Naive thymus-derived CD4-positive, alpha-beta T cell (primary cell): ENCODE measurements at regions of chr15 and their contacts with region 1.

Region 1: GRCh38 chr15:34969340-34970097 is at the start of gene AQR:
- DNase-seq: peak; percentile 74 to 91 (median 85)
- ATAC-seq: peak; percentile 98
- H3K4me3 ChIP-seq: peak within 1 kb of the TSS; percentile 99
- H3K4me3 Mint-ChIP-seq: peak within 1 kb of the TSS; percentile 92 to 99 (median 98)
- H3K27ac ChIP-seq: peak within 1 kb of the TSS; percentile 83
- H3K27ac Mint-ChIP-seq: peak within 1 kb of the TSS; percentile 88 to 100 (median 95)
- H3K4me1 ChIP-seq: peaks cover 10 to 15% of the 10 kb centered on the region in 2 donors
- H3K4me1 Mint-ChIP-seq: peaks cover 30 to 56% (median 51%) of the 10 kb centered on the region in 7 donors
- H3K27me3 ChIP-seq: no peaks in the 10 kb centered on the region
- H3K27me3 Mint-ChIP-seq: no peaks in the 10 kb centered on the region
- total RNA-seq, gene AQR: 38.1 to 43.5 (median 41.3) TPM

Region 2: DNA sequence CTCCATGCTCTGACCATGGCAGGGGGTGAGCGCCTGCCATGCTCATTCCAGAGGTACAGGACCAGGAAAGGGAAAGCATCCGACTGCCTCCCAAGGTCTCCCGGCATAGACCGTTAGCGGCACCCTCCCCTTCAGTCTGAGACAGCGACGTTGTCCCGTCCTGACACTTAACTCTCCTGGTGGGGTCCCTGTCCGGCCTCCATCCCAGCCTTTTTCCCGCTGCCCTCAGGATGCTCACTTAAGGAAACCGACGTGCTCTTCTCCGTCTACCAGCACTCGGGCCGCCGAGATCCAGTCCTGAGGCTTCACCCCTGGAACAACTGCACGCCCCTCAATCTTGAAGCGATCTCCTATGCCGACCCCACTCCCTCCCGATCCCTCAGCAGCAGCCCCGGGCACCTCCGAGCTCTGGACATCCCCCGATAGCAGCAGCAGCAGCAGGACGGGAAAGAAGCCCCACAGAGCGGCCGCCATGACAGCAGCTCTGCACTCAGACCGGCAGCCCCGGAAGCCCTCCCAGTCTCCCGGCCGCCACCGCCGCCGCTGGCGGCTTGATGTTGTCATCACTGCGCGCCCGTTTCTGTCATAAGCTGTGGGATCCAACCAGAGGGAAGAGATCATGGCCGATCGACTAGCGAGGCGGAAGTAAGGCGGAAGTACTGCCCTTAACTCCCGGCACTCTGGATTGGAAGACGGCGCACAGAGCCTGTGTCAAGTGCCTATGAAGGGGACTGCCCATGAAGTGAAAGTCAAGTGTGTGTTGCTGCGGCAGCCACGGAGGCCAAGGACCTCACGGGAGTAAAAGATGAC is 867.9 kb before region 1 on chr15 and contains the starts of genes EMC7 and PGBD4:
- CTCF ChIA-PET with region 1: no interaction called
- POLR2A ChIA-PET with region 1: no interaction called
- intact Hi-C with region 1: loop called in 1 of 2 experiments (anchors 5 kb)
- DNase-seq: peak; percentile 98 to 99 (median 99)
- ATAC-seq: peak; percentile 99
- H3K4me3 ChIP-seq: peak within 1 kb of the TSS; percentile 66
- H3K4me3 Mint-ChIP-seq: peak within 1 kb of the TSS; percentile 91 to 100 (median 96)
- H3K27ac ChIP-seq: peak within 1 kb of the TSS; percentile 96
- H3K27ac Mint-ChIP-seq: peak within 1 kb of the TSS; percentile 97 to 100 (median 98)
- H3K4me1 ChIP-seq: peaks cover 16 to 27% of the 10 kb centered on the region in 2 donors
- H3K4me1 Mint-ChIP-seq: peaks cover 15 to 56% (median 45%) of the 10 kb centered on the region in 7 donors
- H3K27me3 ChIP-seq: no peaks in the 10 kb centered on the region
- H3K27me3 Mint-ChIP-seq: peaks cover 0 to 3% (median 0%) of the 10 kb centered on the region in 5 donors
- total RNA-seq, gene EMC7: 30.1 to 65.1 (median 36.9) TPM
- total RNA-seq, gene PGBD4: 3.2 to 6.5 (median 4.2) TPM

Region 3: GRCh38 chr15:34837246-34838016 is 132.1 kb before region 1 on chr15:
- CTCF ChIA-PET with region 1: no interaction called
- POLR2A ChIA-PET with region 1: no interaction called
- intact Hi-C with region 1: no loop called
- DNase-seq: no peak
- ATAC-seq: no peak
- H3K4me3 ChIP-seq: no peak overlapping the region
- H3K4me3 Mint-ChIP-seq: no peak overlapping the region
- H3K27ac ChIP-seq: no peak overlapping the region
- H3K27ac Mint-ChIP-seq: no peak overlapping the region
- H3K4me1 ChIP-seq: no peaks in the 10 kb centered on the region
- H3K4me1 Mint-ChIP-seq: no peaks in the 10 kb centered on the region
- H3K27me3 ChIP-seq: no peaks in the 10 kb centered on the region
- H3K27me3 Mint-ChIP-seq: peaks cover 6 to 21% (median 15%) of the 10 kb centered on the region in 5 donors

Region 4: GRCh38 chr15:34927726-34928125 is 41.8 kb before region 1 on chr15:
- CTCF ChIA-PET with region 1: no interaction called
- POLR2A ChIA-PET with region 1: no interaction called
- intact Hi-C with region 1: loop called in 1 of 2 experiments (anchors 5 kb)
- DNase-seq: no peak
- ATAC-seq: no peak
- H3K4me3 ChIP-seq: no peak overlapping the region
- H3K4me3 Mint-ChIP-seq: no peak overlapping the region
- H3K27ac ChIP-seq: no peak overlapping the region
- H3K27ac Mint-ChIP-seq: no peak overlapping the region
- H3K4me1 ChIP-seq: no peaks in the 10 kb centered on the region
- H3K4me1 Mint-ChIP-seq: peaks cover 0 to 10% (median 0%) of the 10 kb centered on the region in 7 donors
- H3K27me3 ChIP-seq: no peaks in the 10 kb centered on the region
- H3K27me3 Mint-ChIP-seq: no peaks in the 10 kb centered on the region

Region 5: GRCh38 chr15:34987985-34988873 is 18.7 kb after region 1 on chr15 and contains the start of gene ZNF770:
- CTCF ChIA-PET with region 1: interaction called, 27 read pairs
- POLR2A ChIA-PET with region 1: interaction called, 126 read pairs
- intact Hi-C with region 1: loop called (anchors 1 kb)
- DNase-seq: peak; percentile 67 to 91 (median 85)
- ATAC-seq: peak; percentile 95
- H3K4me3 ChIP-seq: peak within 1 kb of the TSS; percentile 99
- H3K4me3 Mint-ChIP-seq: peak within 1 kb of the TSS; percentile 93 to 100 (median 98)
- H3K27ac ChIP-seq: peak within 1 kb of the TSS; percentile 97
- H3K27ac Mint-ChIP-seq: peak within 1 kb of the TSS; percentile 96 to 100 (median 99)
- H3K4me1 ChIP-seq: peaks cover 22 to 25% of the 10 kb centered on the region in 2 donors
- H3K4me1 Mint-ChIP-seq: peaks cover 20 to 55% (median 45%) of the 10 kb centered on the region in 7 donors
- H3K27me3 ChIP-seq: no peaks in the 10 kb centered on the region
- H3K27me3 Mint-ChIP-seq: no peaks in the 10 kb centered on the region
- total RNA-seq, gene ZNF770: 32.5 to 69.9 (median 50.2) TPM

Region 6: DNA sequence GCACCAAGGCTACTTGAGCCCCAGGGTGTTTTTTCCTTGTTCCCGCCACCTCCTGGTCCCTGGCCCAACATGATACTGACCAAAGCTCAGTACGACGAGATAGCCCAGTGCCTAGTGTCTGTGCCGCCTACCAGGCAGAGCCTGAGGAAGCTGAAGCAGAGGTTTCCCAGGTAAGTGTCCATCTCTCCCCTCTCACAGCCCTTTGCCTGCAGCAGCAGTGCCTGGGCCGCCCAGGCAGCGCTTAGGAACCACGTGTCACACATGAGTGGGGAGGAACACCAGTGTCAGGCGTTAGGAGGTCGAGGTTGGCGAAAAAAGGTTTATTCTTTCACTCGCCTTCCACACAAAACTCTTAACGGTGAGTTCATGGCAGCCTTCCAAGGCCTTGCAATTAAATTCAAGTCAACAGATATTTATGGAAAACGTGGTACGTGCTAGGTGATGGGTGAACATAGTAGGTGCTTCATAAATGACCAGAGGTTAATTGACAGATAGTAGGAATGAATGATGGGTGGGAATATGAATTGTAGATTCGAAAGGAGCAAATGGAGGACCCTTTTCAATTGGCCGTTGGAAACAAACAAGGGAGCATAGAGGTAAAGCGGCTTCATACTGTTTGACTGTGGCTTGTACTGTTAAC is 1610.4 kb after region 1 on chr15:
- CTCF ChIA-PET with region 1: no interaction called
- POLR2A ChIA-PET with region 1: no interaction called
- intact Hi-C with region 1: loop called in 1 of 2 experiments (anchors 5 kb)
- DNase-seq: peak in 1 of 9 donors; percentile 27
- ATAC-seq: peak; percentile 23
- H3K4me3 ChIP-seq: peak overlapping the region; percentile 92
- H3K4me3 Mint-ChIP-seq: peak overlapping the region; percentile 85 to 94 (median 92)
- H3K27ac ChIP-seq: peak overlapping the region; percentile 85
- H3K27ac Mint-ChIP-seq: peak overlapping the region; percentile 56 to 96 (median 91)
- H3K4me1 ChIP-seq: peaks cover 6% of the 10 kb centered on the region in 2 donors
- H3K4me1 Mint-ChIP-seq: peaks cover 7 to 34% (median 26%) of the 10 kb centered on the region in 7 donors
- H3K27me3 ChIP-seq: no peaks in the 10 kb centered on the region
- H3K27me3 Mint-ChIP-seq: peaks cover 0 to 4% (median 0%) of the 10 kb centered on the region in 5 donors